GM13977 (cell line): ENCODE measurements at regions of chr20 and their contacts with region 1.

Region 1: GRCh38 chr20:58850693-58851174 is at the start of gene GNAS-AS1:
- DNase-seq: peak; percentile 96
- CTCF ChIP-seq: peak; percentile 3

Region 2: DNA sequence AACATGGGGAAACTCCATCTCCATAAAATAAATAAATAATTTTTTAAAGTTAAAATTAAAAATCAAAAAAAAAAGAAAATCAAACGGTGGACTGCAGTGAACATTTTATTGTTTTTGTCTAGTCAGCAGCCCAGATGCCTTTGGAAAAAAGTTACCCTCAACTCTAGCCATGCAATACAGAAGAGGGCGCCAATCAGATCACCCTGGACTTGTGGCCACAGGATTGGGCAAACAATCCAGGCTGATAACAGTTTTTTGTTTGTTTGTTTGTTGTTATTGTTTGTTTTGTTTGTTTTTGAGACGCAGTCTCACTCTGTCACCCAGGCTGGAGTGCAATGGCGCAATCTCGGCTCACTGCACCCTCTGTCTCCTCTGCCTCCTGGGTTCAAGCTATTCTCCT is 99.9 kb after region 1 on chr20:
- in situ Hi-C with region 1: no loop called
- DNase-seq: no peak
- CTCF ChIP-seq: no peak

Region 3: DNA sequence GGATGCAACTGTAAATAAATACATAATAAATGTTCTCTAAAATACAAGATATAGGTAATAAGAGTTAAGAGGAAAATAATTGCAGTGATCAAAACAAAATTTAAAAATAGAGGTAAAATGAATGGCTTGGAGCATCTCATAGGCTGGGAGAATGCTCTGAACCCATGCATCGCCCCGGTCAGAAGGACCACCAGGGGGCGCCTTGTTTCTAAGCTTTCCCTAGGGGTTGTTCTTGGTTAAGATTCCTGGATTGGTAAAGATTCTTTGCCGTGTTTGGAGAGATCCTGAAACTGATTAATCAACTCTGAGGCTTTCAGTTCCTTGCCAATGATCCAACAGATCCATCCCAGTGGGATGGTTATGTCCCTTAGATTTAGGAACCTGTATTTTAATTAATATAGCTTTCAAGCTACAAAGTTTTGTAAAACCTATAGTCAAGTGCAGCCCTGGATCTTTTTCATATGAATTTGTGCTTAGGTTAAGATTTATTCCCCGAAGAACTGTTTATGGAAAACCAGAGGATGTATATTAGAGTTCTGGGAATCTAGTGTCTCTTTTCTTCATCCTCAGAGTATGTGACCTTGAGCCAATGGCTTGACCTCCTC is 237.2 kb after region 1 on chr20:
- in situ Hi-C with region 1: loop called (anchors 25 kb)
- DNase-seq: peak; percentile 54
- CTCF ChIP-seq: peak; percentile 87

Region 4: GRCh38 chr20:59455402-59456341 is 604.9 kb after region 1 on chr20:
- in situ Hi-C with region 1: loop called (anchors 25 kb)
- DNase-seq: peak; percentile 48
- CTCF ChIP-seq: peak; percentile 46